CD8-positive, alpha-beta memory T cell (primary cell): ENCODE measurements at regions of chr12 and their contacts with region 1.

Region 1: DNA sequence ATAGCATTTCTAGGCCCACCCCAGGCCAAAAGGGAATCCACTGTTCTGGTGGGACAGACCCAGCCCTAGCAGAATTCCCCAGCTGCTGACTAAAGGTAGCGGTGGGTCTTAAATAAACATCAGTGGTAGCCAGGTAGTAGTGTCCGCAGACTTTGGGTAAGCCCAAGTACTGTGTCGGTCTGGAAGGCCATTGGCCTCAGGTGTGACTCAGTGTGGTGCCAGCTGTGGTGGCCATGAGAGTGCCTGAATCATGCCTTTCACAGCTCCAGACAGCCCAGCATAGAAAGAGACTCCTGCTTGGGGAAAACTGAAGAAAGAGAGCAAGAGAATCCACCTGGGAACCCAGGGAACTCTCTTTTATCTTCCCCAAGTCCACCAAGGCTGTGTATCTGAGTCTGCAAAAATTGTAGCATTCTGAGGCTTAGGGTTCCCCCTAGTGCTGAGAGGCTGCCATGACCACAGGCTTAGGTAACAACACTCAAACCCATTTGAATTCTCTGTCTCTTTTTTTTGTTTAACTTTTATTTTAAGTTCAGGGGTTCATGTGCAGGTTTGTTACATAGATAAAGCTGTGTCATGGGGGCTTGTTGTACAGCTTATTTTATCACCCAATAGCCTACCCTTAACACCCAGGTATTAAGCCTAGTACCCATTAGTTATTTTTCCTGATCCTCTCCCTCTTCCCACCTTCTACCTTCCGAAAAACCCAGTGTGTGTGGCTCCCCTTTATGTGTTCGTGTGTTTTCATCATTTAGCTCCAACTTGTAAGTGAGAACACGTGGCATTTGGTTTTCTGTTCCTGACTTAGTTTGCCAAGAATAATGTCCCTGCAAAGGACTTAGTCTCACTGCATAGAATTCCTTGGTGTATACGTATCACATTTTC is 16.7 kb upstream of the CD163L1 start:
- DNase-seq: peak in 4 of 5 donors; percentile 4 to 68 (median 24)
- H3K4me3 ChIP-seq: no peak overlapping the region
- H3K4me3 Mint-ChIP-seq: no peak overlapping the region
- H3K27ac ChIP-seq: no peak overlapping the region
- H3K27ac Mint-ChIP-seq: no peak overlapping the region
- H3K4me1 ChIP-seq: no peaks in the 10 kb centered on the region
- H3K4me1 Mint-ChIP-seq: no peaks in the 10 kb centered on the region
- H3K27me3 ChIP-seq: no peaks in the 10 kb centered on the region
- H3K27me3 Mint-ChIP-seq: peaks cover 3 to 15% of the 10 kb centered on the region in 2 donors

Region 2: GRCh38 chr12:7219599-7220243 is 240.9 kb before region 1 on chr12:
- CTCF ChIA-PET with region 1: interaction called, 25 read pairs
- POLR2A ChIA-PET with region 1: no interaction called
- DNase-seq: peak; percentile 55 to 79 (median 56)
- H3K4me3 ChIP-seq: no peak overlapping the region
- H3K4me3 Mint-ChIP-seq: no peak overlapping the region
- H3K27ac ChIP-seq: no peak overlapping the region
- H3K27ac Mint-ChIP-seq: no peak overlapping the region
- H3K4me1 ChIP-seq: no peaks in the 10 kb centered on the region
- H3K4me1 Mint-ChIP-seq: no peaks in the 10 kb centered on the region
- H3K27me3 ChIP-seq: no peaks in the 10 kb centered on the region
- H3K27me3 Mint-ChIP-seq: no peaks in the 10 kb centered on the region

Region 3: DNA sequence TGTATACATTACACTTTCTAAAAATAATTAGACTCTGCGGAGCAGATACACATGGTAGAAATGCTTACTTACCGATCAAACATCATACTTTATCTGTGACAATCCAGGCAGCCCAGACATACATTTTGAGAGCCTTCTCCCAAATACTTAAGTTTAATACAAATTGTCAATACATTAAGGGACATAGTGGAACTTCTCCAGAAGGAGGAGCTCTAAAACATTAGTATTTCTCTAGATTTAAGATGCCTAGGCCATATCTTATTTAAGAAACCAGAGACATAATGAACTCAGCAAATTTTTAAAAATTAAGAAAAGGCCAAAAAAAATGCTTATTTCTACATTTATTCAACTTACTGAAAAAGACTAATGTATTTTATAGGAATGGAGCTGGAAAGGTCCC is 140.7 kb before region 1 on chr12:
- CTCF ChIA-PET with region 1: interaction called, 10 read pairs
- POLR2A ChIA-PET with region 1: no interaction called
- DNase-seq: no peak
- H3K4me3 ChIP-seq: no peak overlapping the region
- H3K4me3 Mint-ChIP-seq: no peak overlapping the region
- H3K27ac ChIP-seq: no peak overlapping the region
- H3K27ac Mint-ChIP-seq: no peak overlapping the region
- H3K4me1 ChIP-seq: no peaks in the 10 kb centered on the region
- H3K4me1 Mint-ChIP-seq: no peaks in the 10 kb centered on the region
- H3K27me3 ChIP-seq: no peaks in the 10 kb centered on the region
- H3K27me3 Mint-ChIP-seq: no peaks in the 10 kb centered on the region

Region 4: GRCh38 chr12:7498832-7499231 is 38.2 kb after region 1 on chr12:
- CTCF ChIA-PET with region 1: no interaction called
- POLR2A ChIA-PET with region 1: no interaction called
- DNase-seq: no peak
- H3K4me3 ChIP-seq: no peak overlapping the region
- H3K4me3 Mint-ChIP-seq: no peak overlapping the region
- H3K27ac ChIP-seq: no peak overlapping the region
- H3K27ac Mint-ChIP-seq: no peak overlapping the region
- H3K4me1 ChIP-seq: no peaks in the 10 kb centered on the region
- H3K4me1 Mint-ChIP-seq: no peaks in the 10 kb centered on the region
- H3K27me3 ChIP-seq: no peaks in the 10 kb centered on the region
- H3K27me3 Mint-ChIP-seq: peaks cover 27 to 56% of the 10 kb centered on the region in 2 donors